ENCODE measurements at regions of chr11 and their contacts with region 1.

Region 1: GRCh38 chr11:131815590-131815989 is 445.2 kb downstream of the NTM start:
- DNase-seq: no peak
- H3K4me3 ChIP-seq: no peak overlapping the region
- CTCF ChIP-seq: no peak

Region 2: GRCh38 chr11:131756479-131757110 is 59.0 kb before region 1 on chr11:
- in situ Hi-C with region 1: loop called (anchors 5 kb)
- DNase-seq: no peak
- H3K4me3 ChIP-seq: no peak overlapping the region
- CTCF ChIP-seq: no peak

Region 3: DNA sequence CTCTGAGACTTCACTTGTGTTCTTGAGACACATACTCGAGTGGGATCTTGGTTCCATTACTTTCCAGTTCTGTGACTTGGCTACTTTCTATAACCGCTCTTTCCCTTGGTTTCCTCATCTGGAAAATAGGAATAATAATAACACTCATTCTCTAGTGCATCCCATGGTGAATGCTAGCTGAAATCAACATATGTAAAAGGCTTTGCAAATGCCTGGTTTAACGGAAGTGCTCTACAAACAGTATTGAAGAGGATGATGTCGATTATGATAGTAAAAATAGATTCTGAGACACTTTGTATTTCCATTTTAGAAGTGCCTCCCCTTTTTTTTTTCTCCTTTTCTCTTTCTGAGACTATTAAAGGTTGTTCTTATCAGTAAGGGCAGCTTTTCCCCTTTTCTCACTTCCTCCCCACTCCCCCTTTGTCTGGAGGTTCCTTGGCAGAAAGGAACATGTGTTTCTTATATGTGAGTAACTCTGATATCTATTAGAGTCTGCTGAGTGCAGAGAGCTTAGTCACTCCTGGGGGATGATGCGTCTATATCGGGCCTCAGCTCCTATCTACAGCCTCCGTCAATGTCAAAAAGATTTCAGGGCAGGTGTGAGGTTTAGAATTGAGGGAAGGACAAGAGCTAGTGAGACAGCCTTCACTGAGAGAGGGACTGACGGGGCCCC is 44.1 kb after region 1 on chr11:
- in situ Hi-C with region 1: loop called (anchors 5 kb)
- DNase-seq: no peak
- H3K4me3 ChIP-seq: no peak overlapping the region
- CTCF ChIP-seq: no peak

Region 4: DNA sequence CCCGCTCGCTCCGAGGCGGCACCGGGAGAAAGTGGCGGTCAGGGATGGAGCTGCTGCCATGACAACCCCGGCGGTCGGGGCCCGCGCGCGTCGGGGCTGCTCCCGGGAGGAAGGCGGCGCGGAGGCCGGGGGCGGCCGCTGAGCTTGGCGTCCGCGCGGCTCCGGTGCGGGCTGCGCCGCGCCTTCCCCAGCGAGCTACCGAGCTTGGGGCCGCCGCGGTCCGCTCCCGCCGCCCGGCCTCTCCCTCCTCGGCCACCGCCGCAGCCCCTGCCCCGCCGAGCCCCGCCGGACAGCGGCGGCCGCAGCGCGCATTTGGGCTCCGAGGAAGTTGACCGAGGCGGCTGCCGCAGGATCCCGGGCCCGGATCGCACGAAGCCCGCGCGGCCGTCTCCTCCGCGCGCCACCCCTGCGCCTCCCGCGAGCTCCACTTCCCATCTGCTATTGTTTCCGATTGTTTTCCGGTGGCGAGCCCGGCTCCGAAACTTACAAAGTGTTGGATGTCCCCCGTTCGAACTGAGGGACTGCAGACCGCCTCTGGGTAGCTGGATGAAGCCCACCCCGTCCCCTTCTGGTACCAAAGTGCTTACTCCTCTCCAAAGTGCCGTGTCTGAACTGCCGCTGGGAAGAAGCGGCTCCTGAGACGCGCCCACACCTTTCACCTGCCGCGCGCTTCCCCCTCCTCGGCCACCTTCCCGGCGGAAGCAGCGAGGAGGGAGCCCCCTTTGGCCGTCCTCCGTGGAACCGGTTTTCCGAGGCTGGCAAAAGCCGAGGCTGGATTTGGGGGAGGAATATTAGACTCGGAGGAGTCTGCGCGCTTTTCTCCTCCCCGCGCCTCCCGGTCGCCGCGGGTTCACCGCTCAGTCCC is 95.2 kb after region 1 on chr11:
- in situ Hi-C with region 1: no loop called
- DNase-seq: no peak
- H3K4me3 ChIP-seq: peak overlapping the region; percentile 90
- CTCF ChIP-seq: no peak